ENCODE measurements at regions of chr10 and their contacts with region 1.

Region 1: GRCh38 chr10:60769406-60769805 is 8.9 kb upstream of the CDK1 start:
- DNase-seq: no peak
- H3K4me3 Mint-ChIP-seq: no peak overlapping the region
- H3K27ac Mint-ChIP-seq: no peak overlapping the region
- H3K4me1 Mint-ChIP-seq: peaks cover 4% of the 10 kb centered on the region
- H3K27me3 Mint-ChIP-seq: no peaks in the 10 kb centered on the region

Region 2: GRCh38 chr10:60444494-60445064 is 324.8 kb before region 1 on chr10:
- CTCF ChIA-PET with region 1: interaction called, 7 read pairs
- POLR2A ChIA-PET with region 1: no interaction called
- intact Hi-C with region 1: loop called (anchors 2 kb)
- DNase-seq: no peak
- H3K4me3 Mint-ChIP-seq: no peak overlapping the region
- H3K27ac Mint-ChIP-seq: no peak overlapping the region
- H3K4me1 Mint-ChIP-seq: peaks cover 10% of the 10 kb centered on the region
- H3K27me3 Mint-ChIP-seq: no peaks in the 10 kb centered on the region

Region 3: DNA sequence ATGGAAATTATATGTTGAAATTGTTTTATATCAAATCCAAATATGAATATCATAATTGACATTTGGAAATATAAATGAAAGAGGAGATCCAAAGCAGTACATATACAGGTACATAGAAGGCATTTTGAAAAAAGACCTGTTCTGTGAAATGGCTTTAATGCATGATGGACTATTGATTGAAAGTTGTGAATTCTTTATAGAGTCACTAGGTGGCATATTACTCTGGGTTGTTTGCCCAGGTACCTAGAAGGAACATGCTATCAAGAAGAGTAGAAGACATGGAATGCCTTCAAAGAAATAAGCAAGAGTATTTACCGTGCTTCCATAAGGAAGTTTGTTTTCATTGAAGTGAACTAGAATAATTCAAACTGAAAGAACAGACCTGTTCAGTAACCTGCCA is 219.7 kb before region 1 on chr10:
- CTCF ChIA-PET with region 1: no interaction called
- POLR2A ChIA-PET with region 1: no interaction called
- intact Hi-C with region 1: loop called (anchors 2 kb)
- DNase-seq: no peak
- H3K4me3 Mint-ChIP-seq: no peak overlapping the region
- H3K27ac Mint-ChIP-seq: no peak overlapping the region
- H3K4me1 Mint-ChIP-seq: no peaks in the 10 kb centered on the region
- H3K27me3 Mint-ChIP-seq: no peaks in the 10 kb centered on the region

Region 4: GRCh38 chr10:60708666-60709585 is 60.5 kb before region 1 on chr10:
- CTCF ChIA-PET with region 1: no interaction called
- POLR2A ChIA-PET with region 1: interaction called, 3 read pairs
- intact Hi-C with region 1: loop called (anchors 1 kb)
- DNase-seq: no peak
- H3K4me3 Mint-ChIP-seq: no peak overlapping the region
- H3K27ac Mint-ChIP-seq: peak overlapping the region; percentile 76
- H3K4me1 Mint-ChIP-seq: peaks cover 54% of the 10 kb centered on the region
- H3K27me3 Mint-ChIP-seq: no peaks in the 10 kb centered on the region

Measured in activated CD4-positive, alpha-beta memory T cell treated with anti-CD3 and anti-CD28 coated beads for 36 hours (primary cell).